ENCODE measurements at regions of chr22 and their contacts with region 1.

Region 1: GRCh38 chr22:20803696-20804324 is 29.9 kb downstream of the SERPIND1 start:
- DNase-seq: peak; percentile 16
- H3K4me3 ChIP-seq: no peak overlapping the region
- H3K27ac ChIP-seq: no peak overlapping the region
- H3K27me3 ChIP-seq: no peaks in the 10 kb centered on the region
- CTCF ChIP-seq: peak; percentile 79

Region 2: GRCh38 chr22:20783844-20784723 is 19.7 kb before region 1 on chr22:
- CTCF ChIA-PET with region 1: interaction called, 14 read pairs
- POLR2A ChIA-PET with region 1: no interaction called
- DNase-seq: peak; percentile 20
- H3K4me3 ChIP-seq: no peak overlapping the region
- H3K27ac ChIP-seq: no peak overlapping the region
- H3K27me3 ChIP-seq: no peaks in the 10 kb centered on the region
- CTCF ChIP-seq: peak; percentile 76

Region 3: DNA sequence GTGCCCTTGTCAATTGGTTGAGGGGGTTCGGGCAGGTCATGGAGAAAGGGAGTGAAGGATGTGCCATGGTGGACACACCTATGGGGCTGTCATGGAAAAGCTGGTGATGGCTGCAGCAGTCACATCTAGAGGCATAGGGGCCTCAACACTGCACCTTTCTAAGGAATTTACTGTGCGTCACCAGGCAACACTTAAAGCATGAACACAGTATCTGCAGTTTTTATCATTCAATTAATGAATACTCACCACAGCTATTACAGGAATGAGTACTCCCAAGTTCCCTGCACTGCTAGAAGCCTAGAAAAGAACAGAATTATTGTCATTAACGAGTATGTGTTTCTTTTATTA is 10.9 kb before region 1 on chr22:
- CTCF ChIA-PET with region 1: interaction called, 14 read pairs
- POLR2A ChIA-PET with region 1: no interaction called
- DNase-seq: no peak
- H3K4me3 ChIP-seq: no peak overlapping the region
- H3K27ac ChIP-seq: no peak overlapping the region
- H3K27me3 ChIP-seq: no peaks in the 10 kb centered on the region
- CTCF ChIP-seq: no peak

Region 4: DNA sequence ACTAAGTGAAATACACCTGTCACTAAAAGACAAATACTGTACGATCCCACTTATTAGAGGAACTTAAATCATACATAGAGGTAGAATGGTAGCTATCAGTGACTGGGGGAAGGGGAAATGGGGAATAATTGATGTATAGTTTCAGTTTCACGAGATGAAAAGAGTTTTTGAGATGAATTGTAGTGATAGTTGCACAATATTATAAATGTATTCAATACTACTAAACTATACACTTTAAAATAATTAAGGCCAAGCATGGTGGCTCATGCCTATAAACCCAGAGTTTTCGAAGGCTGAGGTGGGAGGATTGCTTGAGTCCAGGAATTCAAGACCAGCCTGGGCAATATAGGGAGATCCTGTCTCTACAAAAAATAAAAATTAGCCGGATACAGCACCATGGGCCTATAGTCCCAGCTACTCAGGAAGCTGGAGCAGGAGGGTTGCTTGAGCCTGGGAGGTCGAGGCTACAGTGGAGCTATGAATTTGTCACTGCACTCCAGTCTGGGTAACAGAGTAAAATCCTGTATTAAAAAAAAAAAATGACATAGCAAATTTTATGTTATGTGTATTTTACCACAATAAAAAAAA is 10.5 kb after region 1 on chr22:
- CTCF ChIA-PET with region 1: no interaction called
- POLR2A ChIA-PET with region 1: no interaction called
- DNase-seq: no peak
- H3K4me3 ChIP-seq: no peak overlapping the region
- H3K27ac ChIP-seq: no peak overlapping the region
- H3K27me3 ChIP-seq: no peaks in the 10 kb centered on the region
- CTCF ChIP-seq: no peak

Region 5: DNA sequence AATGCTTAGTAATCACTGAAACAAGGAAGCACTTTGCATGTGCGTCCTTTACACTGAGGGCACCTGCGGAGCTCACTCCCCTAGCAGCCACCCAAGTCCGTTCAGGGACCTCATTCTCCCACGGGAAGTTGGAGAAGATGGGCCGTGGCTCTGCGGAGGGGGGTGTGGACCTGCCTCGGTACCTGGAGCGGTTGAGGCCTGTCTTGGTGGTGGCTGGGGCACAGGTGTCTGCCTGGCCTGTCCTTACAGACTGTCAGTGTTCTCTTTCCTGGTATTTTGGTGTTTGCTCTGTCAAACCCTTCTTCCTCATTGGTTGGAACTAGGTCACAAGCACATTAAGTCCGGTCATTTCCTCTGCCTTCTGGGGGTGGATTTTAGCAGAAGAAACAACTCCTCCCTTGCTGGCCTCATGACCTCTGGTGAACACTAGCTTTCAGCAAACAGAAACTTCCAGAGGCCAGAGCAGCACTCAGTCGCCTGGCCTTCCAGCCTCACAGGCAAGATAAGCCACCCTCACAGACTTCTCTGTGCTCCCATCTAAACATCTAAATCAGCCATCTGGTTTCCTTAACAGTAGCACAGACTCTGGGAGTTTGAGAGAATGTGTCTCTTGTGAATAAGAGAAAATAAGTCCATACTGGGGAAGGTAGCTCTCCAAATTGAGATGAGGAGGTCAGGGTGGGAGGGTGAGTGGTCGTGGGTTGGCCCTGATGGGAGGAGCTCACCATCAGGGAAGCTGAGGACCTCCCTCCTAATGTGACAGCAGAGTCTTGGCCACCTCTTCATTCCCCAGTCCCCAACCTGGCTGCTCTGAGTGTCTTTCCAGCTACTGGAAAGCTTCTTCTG is 63.6 kb after region 1 on chr22:
- CTCF ChIA-PET with region 1: interaction called, 10 read pairs
- POLR2A ChIA-PET with region 1: no interaction called
- DNase-seq: no peak
- H3K4me3 ChIP-seq: no peak overlapping the region
- H3K27ac ChIP-seq: peak overlapping the region; percentile 52
- H3K27me3 ChIP-seq: no peaks in the 10 kb centered on the region
- CTCF ChIP-seq: no peak

Measured in AG04450 (cell line).